Dorsolateral prefrontal cortex (tissue), 120 donors: ENCODE measurements at regions of chr16 and their contacts with region 1.

Region 1: GRCh38 chr16:12819126-12820117 is 15.7 kb upstream of the CPPED1 start:
- DNase-seq: peak in 5 of 10 donors; percentile 27 to 65 (median 52)
- H3K4me3 ChIP-seq: no peak overlapping the region
- H3K27ac ChIP-seq: no peak overlapping the region
- H3K27me3 ChIP-seq: no peaks in the 10 kb centered on the region
- CTCF ChIP-seq: peak; percentile 20 to 85 (median 71)

Region 2: DNA sequence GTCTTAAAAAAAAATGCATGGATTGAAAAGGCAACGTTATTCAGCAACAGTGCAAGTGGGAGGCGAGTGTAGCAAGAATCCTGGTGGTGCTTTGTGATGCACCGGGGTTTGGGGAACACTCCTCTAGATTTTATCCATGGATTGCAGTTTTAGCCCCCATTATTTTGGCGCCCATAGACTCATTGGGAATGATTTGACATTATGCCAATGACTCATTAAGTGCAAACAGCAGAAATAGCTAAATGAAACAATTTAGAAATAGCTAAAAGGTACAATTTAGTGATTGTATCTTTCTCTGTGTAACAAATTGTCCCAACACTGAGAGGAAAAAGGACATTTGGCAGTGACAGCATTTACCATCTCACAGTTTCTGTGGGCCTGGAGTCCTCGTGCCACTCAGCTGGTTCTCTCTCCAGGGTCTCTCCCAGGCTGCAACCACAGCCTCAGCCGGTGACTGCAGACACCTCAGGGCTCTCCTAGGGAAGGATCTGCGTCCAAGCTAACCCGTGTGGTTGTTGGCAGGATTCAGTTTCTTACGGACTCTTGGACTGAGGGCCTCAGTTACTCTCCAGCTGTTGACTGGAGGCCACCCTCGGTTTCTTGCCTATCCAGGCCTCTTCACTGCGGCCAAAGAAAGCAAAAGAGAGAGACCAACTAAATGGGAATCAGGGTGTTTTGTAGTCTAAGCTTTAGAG is 444.2 kb before region 1 on chr16:
- intact Hi-C with region 1: loop called in 1 of 2 experiments (anchors 10 kb)
- DNase-seq: no peak
- H3K4me3 ChIP-seq: no peak overlapping the region
- H3K27ac ChIP-seq: peak overlapping the region in 50 of 59 donors; percentile 6 to 91 (median 62)
- H3K27me3 ChIP-seq: no peaks in the 10 kb centered on the region
- CTCF ChIP-seq: no peak